ENCODE measurements at regions of chr9 and their contacts with region 1.

Region 1: GRCh38 chr9:132973713-132974112 is 4.8 kb upstream of the GFI1B start:
- DNase-seq: peak; percentile 61 to 87 (median 72)
- ATAC-seq: peak; percentile 68
- H3K4me3 ChIP-seq: no peak overlapping the region
- H3K27ac ChIP-seq: no peak overlapping the region
- H3K4me1 ChIP-seq: peaks cover 12 to 29% of the 10 kb centered on the region in 2 experiments
- H3K27me3 ChIP-seq: no peaks in the 10 kb centered on the region
- CTCF ChIP-seq: no peak
- EP300 ChIP-seq: no peak
- POLR2A ChIP-seq: no peak
- RAD21 ChIP-seq: no peak

Region 2: DNA sequence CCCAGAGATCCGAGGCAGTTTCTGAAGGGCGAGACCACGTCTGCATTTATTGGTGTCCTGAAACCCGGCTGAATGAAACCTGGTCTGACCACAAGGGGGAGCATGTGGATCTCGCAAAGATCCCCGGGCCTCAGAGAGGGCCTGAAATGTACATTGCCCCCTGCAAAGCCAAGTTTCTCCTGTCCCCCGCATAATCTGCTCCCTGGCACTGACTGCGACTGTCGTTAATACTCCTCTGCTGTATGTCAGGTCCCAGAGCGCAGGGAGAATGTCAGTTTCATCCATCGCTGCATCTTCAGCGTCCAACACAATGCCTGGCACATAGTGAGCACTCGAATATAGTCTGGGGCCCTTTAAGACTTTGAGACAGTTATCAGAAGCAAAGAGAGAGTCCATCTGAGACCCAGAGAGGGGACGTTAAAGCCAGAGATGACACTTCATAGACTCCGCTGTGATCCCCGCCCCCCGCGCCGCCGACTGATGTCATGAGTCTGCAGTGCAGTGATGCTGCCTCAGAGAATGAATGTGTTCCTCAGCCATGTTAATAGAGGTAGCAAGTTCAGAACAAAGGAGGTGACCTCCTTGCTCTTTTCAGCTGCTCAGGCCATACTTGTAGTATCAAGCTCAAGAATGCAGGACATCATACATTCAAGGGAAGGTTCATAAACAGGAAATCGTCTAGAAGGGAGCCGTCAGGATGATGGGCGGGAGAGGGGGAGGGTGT is 465.8 kb before region 1 on chr9:
- CTCF ChIA-PET with region 1: no interaction called
- POLR2A ChIA-PET with region 1: no interaction called
- in situ Hi-C with region 1: loop called (anchors 10 kb)
- intact Hi-C with region 1: loop called (anchors 10 kb)
- DNase-seq: peak; percentile 79 to 87 (median 82)
- ATAC-seq: peak; percentile 93
- H3K4me3 ChIP-seq: no peak overlapping the region
- H3K27ac ChIP-seq: no peak overlapping the region
- H3K4me1 ChIP-seq: peaks cover 0 to 6% of the 10 kb centered on the region in 2 experiments; a peak in 1 of 5 replicates
- H3K27me3 ChIP-seq: peaks cover 60 to 89% of the 10 kb centered on the region in 2 experiments
- CTCF ChIP-seq: peak; percentile 81 to 88 (median 88)
- EP300 ChIP-seq: no peak
- POLR2A ChIP-seq: no peak
- RAD21 ChIP-seq: peak; percentile 71 to 84

Region 3: GRCh38 chr9:132814937-132815336 is 158.8 kb before region 1 on chr9:
- CTCF ChIA-PET with region 1: no interaction called
- POLR2A ChIA-PET with region 1: no interaction called
- in situ Hi-C with region 1: loop called (anchors 5 kb)
- intact Hi-C with region 1: loop called (anchors 5 kb)
- DNase-seq: no peak
- ATAC-seq: no peak
- H3K4me3 ChIP-seq: no peak overlapping the region
- H3K27ac ChIP-seq: no peak overlapping the region
- H3K4me1 ChIP-seq: peaks cover 0 to 5% of the 10 kb centered on the region in 2 experiments; a peak in 1 of 5 replicates
- H3K27me3 ChIP-seq: peaks cover 24 to 62% of the 10 kb centered on the region in 2 experiments; a peak in 4 of 5 replicates
- CTCF ChIP-seq: no peak
- EP300 ChIP-seq: no peak
- POLR2A ChIP-seq: no peak
- RAD21 ChIP-seq: no peak

Region 4: DNA sequence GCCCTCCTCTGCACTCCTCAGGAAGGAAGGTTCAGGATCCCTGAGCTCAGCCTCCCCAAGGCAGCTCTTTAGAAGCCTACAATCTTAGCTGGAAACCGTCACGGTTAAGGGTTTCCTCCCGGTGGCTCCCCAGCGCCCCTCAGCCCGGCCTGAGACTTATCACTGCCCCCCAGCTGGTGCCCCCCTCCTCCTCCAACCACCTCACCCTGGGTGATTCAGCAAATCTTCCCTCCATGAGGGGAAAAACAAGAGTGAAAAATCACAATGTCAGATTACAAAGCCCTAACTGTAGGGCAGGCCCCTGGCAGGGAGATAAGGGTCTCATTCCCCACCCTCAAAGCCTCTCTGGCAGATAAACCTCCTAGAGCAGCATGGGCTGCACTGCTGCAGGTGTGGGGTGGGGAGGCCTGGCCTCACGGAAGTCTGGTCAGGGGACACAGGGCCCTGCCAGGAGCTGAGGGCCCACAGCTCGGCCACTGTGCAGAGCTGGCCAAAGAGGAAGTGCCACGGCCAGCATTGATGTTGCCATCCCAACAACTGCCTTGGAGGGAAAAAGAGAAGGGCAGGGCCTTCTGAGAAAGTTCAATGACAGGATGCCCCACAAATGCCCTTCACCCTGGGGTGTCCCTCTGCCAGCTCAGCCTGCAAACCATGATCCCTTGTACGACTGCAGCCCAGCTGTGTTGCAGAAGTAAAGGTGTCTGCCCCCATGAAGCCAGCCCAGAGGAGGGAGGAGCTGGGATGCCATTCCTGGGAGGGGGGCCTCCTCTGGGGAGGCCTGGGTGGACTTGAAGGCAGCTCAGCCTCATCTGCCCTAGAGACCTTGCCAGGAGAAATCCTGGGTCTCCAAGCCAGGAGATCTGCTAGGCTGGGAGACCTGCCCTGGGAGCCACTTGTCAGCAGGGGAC is 30.6 kb after region 1 on chr9:
- CTCF ChIA-PET with region 1: no interaction called
- POLR2A ChIA-PET with region 1: no interaction called
- in situ Hi-C with region 1: no loop called
- intact Hi-C with region 1: loop called (anchors 1 kb)
- DNase-seq: peak; percentile 89 to 97 (median 94)
- ATAC-seq: peak; percentile 82
- H3K4me3 ChIP-seq: peak overlapping the region; percentile 4; the same call in 1 of the 2 replicates
- H3K27ac ChIP-seq: peak overlapping the region; percentile 90
- H3K4me1 ChIP-seq: peaks cover 57 to 71% of the 10 kb centered on the region in 2 experiments
- H3K27me3 ChIP-seq: no peaks in the 10 kb centered on the region
- CTCF ChIP-seq: peak in 2 of 3 experiments; percentile 25 to 33; a peak in 2 of 6 replicates
- EP300 ChIP-seq: peak; percentile 98
- POLR2A ChIP-seq: no peak
- RAD21 ChIP-seq: peak; percentile 39 to 43

Region 5: DNA sequence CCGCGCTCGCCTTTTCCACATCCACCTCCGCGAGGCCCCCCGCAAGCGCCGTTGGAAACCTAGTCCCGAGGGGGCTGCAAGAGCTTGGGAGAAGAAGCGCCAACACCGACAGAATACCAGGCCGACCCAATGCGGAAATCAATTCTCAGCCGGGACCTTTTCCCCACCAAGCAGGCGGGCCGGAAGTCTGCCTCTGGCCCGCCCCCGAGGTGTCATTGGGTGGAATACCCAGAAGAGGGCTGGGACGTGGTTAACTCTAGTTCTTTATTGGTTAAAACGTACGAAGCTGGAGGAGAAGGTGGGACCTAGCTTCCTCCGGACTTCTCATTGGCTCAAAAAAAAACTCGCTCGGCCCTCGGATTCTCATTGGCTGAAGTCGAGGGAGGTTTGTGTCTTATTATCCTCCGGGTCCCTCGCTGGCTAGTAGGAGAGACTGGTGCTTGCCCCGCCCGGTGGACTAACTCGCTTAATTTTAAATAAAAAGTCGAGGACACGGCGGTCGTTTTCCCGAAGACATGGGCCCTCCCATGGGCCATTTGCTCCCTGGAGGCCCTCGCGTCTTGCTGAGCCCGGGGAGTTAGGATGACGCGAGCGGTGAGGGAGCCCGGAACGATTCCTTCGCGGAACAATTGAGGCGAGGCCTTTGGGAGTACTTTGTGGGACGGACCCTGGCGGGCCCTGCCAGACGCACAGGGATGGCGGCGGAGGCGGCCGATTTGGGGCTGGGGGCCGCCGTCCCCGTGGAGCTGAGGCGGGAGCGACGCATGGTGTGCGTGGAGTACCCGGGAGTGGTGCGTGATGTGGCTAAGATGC is 56.8 kb after region 1 on chr9 and contains the start of gene GTF3C5:
- CTCF ChIA-PET with region 1: no interaction called
- POLR2A ChIA-PET with region 1: no interaction called
- in situ Hi-C with region 1: no loop called
- intact Hi-C with region 1: loop called (anchors 1 kb)
- DNase-seq: peak; percentile 96 to 99 (median 97)
- ATAC-seq: peak; percentile 98
- H3K4me3 ChIP-seq: peak within 1 kb of the TSS; percentile 99
- H3K27ac ChIP-seq: peak within 1 kb of the TSS; percentile 93
- H3K4me1 ChIP-seq: peaks cover 26 to 33% of the 10 kb centered on the region in 2 experiments; a peak in 4 of 5 replicates
- H3K27me3 ChIP-seq: no peaks in the 10 kb centered on the region
- CTCF ChIP-seq: no peak
- EP300 ChIP-seq: no peak
- POLR2A ChIP-seq: peak; percentile 81
- RAD21 ChIP-seq: 0 out of 4 replicates have a peak, but pooled peaks of 1 of the 2 experiments have one; percentile 5
- polyA plus RNA-seq, gene GTF3C5: 3.8 to 8.4 TPM